ENCODE measurements at regions of chr10 and their contacts with region 1.

Region 1: GRCh38 chr10:30433730-30434272 is at the start of gene MAP3K8:
- DNase-seq: peak; percentile 73 to 87 (median 85)
- H3K4me3 ChIP-seq: peak within 1 kb of the TSS; percentile 61
- H3K4me3 Mint-ChIP-seq: peak within 1 kb of the TSS; percentile 87 to 98 (median 92)
- H3K27ac ChIP-seq: peak within 1 kb of the TSS; percentile 88
- H3K27ac Mint-ChIP-seq: peak within 1 kb of the TSS; percentile 86 to 99 (median 92)
- H3K4me1 ChIP-seq: peaks cover 40% of the 10 kb centered on the region
- H3K4me1 Mint-ChIP-seq: peaks cover 50 to 55% (median 51%) of the 10 kb centered on the region in 3 donors
- H3K27me3 ChIP-seq: no peaks in the 10 kb centered on the region
- H3K27me3 Mint-ChIP-seq: peaks cover 0 to 6% of the 10 kb centered on the region in 2 donors
- total RNA-seq, gene MAP3K8: 40.3 to 42.6 TPM

Region 2: DNA sequence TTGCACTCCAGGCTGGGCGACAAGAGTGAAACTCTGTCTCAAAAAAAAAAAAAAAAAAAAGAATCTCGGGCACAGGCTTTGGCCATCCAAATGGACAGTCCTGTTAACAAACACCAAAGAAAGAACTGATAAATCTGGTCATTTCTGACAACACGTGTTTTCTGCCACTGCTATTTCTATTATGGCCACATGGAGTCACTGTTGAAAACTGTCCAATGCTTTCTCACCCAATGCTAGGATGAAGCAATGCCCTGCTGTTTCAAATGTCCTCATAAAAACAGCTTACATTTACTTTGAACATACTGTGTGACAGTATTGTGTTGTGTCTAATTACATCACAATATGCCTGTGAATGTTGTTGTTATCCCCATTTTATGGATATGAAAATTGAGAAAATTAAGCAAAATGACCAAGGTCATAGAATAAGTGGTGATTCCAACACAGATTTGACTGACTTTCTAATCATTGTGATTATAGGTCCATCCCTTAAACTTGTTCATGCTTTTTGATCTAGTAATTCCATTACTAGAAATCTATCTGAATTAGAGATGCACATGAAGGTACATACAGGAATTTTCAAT is 19.7 kb before region 1 on chr10:
- CTCF ChIA-PET with region 1: interaction called, 81 read pairs
- POLR2A ChIA-PET with region 1: interaction called, 9 read pairs
- DNase-seq: peak in 2 of 5 donors; percentile 37 to 40
- H3K4me3 ChIP-seq: no peak overlapping the region
- H3K4me3 Mint-ChIP-seq: no peak overlapping the region
- H3K27ac ChIP-seq: no peak overlapping the region
- H3K27ac Mint-ChIP-seq: peak overlapping the region in 1 of 8 donors; percentile 11
- H3K4me1 ChIP-seq: peaks cover 10% of the 10 kb centered on the region
- H3K4me1 Mint-ChIP-seq: peaks cover 17 to 21% (median 17%) of the 10 kb centered on the region in 3 donors
- H3K27me3 ChIP-seq: no peaks in the 10 kb centered on the region
- H3K27me3 Mint-ChIP-seq: no peaks in the 10 kb centered on the region

Region 3: DNA sequence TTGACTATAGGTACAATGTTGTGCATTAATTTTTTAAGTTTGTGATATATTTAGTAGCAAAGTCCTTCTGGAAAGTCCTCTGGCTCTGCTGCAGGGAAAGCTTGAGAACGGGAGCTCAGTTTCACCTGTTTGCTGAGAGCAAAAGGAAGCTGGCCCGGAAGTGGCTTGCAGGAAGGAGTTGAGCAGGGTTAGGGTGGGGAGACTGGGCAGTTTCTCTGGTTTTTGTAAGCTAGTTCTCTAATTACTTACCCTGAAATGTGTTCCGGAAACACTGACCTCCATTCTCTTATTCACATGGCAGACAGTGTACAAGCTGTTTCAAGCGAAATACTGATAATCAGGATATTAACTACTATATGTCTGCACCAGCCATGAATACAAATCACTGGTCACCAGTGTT is 22.5 kb after region 1 on chr10:
- CTCF ChIA-PET with region 1: interaction called, 13 read pairs
- POLR2A ChIA-PET with region 1: interaction called, 14 read pairs
- DNase-seq: peak in 4 of 5 donors; percentile 21 to 56 (median 27)
- H3K4me3 ChIP-seq: peak overlapping the region; percentile 10
- H3K4me3 Mint-ChIP-seq: peak overlapping the region; percentile 28 to 84 (median 75)
- H3K27ac ChIP-seq: no peak overlapping the region
- H3K27ac Mint-ChIP-seq: peak overlapping the region; percentile 66 to 94 (median 88)
- H3K4me1 ChIP-seq: peaks cover 41% of the 10 kb centered on the region
- H3K4me1 Mint-ChIP-seq: peaks cover 33 to 52% (median 39%) of the 10 kb centered on the region in 3 donors
- H3K27me3 ChIP-seq: no peaks in the 10 kb centered on the region
- H3K27me3 Mint-ChIP-seq: no peaks in the 10 kb centered on the region

Measured in CD8-positive, alpha-beta memory T cell (primary cell).